ENCODE measurements at regions of chr5 and their contacts with region 1.

Region 1: GRCh38 chr5:168291464-168291961 is at the start of gene WWC1:
- DNase-seq: peak in 1 of 2 experiments; percentile 92
- H3K4me3 ChIP-seq: peak within 1 kb of the TSS; percentile 58 to 75 (median 68)
- H3K27ac ChIP-seq: no peak within 1 kb of the TSS
- H3K4me1 ChIP-seq: peaks cover 12 to 32% (median 20%) of the 10 kb centered on the region in 4 experiments
- H3K27me3 ChIP-seq: no peaks in the 10 kb centered on the region; a peak in 1 of 7 replicates
- CTCF ChIP-seq: peak in 2 of 3 experiments; percentile 25 to 52; a peak in 3 of 4 replicates
- EP300 ChIP-seq: no peak
- POLR2A ChIP-seq: peak in 1 of 2 experiments; percentile 61; a peak in 2 of 3 replicates
- RAD21 ChIP-seq: peak; percentile 45 to 53
- total RNA-seq, gene WWC1: 41.1 and 42.7 TPM in 2 replicates

Region 2: GRCh38 chr5:168244838-168245559 is 46.5 kb before region 1 on chr5:
- CTCF ChIA-PET with region 1: no interaction called
- POLR2A ChIA-PET with region 1: no interaction called
- DNase-seq: no peak
- H3K4me3 ChIP-seq: no peak overlapping the region
- H3K27ac ChIP-seq: no peak overlapping the region
- H3K4me1 ChIP-seq: peaks cover 0 to 3% (median 0%) of the 10 kb centered on the region in 4 experiments; a peak in 1 of 7 replicates
- H3K27me3 ChIP-seq: peaks cover 0 to 10% (median 7%) of the 10 kb centered on the region in 4 experiments; a peak in 6 of 7 replicates
- CTCF ChIP-seq: no peak
- EP300 ChIP-seq: no peak
- POLR2A ChIP-seq: no peak
- RAD21 ChIP-seq: no peak

Region 3: GRCh38 chr5:168268949-168269943 is 22.3 kb before region 1 on chr5:
- CTCF ChIA-PET with region 1: interaction called, 16 read pairs
- POLR2A ChIA-PET with region 1: no interaction called
- DNase-seq: peak; percentile 86 to 98
- H3K4me3 ChIP-seq: peak overlapping the region; percentile 17 to 57 (median 31); a peak in 5 of 8 replicates
- H3K27ac ChIP-seq: no peak overlapping the region
- H3K4me1 ChIP-seq: peaks cover 0 to 9% (median under 1%) of the 10 kb centered on the region in 4 experiments; a peak in 3 of 7 replicates
- H3K27me3 ChIP-seq: no peaks in the 10 kb centered on the region; a peak in 1 of 7 replicates
- CTCF ChIP-seq: peak; percentile 94 to 97 (median 94)
- EP300 ChIP-seq: 0 out of 3 replicates have a peak, but pooled peaks of 1 of the 2 experiments have one; percentile 45
- POLR2A ChIP-seq: peak in 1 of 2 experiments; percentile 50; a peak in 2 of 3 replicates
- RAD21 ChIP-seq: peak; percentile 99 to 100

Region 4: GRCh38 chr5:168317521-168318147 is 26.1 kb after region 1 on chr5:
- CTCF ChIA-PET with region 1: interaction called, 56 read pairs
- POLR2A ChIA-PET with region 1: interaction called, 4 read pairs
- DNase-seq: no peak
- H3K4me3 ChIP-seq: no peak overlapping the region
- H3K27ac ChIP-seq: no peak overlapping the region
- H3K4me1 ChIP-seq: peaks cover 2 to 19% (median 4%) of the 10 kb centered on the region in 4 experiments; a peak in 5 of 7 replicates
- H3K27me3 ChIP-seq: no peaks in the 10 kb centered on the region
- CTCF ChIP-seq: no peak
- EP300 ChIP-seq: no peak
- POLR2A ChIP-seq: no peak
- RAD21 ChIP-seq: no peak

Region 5: DNA sequence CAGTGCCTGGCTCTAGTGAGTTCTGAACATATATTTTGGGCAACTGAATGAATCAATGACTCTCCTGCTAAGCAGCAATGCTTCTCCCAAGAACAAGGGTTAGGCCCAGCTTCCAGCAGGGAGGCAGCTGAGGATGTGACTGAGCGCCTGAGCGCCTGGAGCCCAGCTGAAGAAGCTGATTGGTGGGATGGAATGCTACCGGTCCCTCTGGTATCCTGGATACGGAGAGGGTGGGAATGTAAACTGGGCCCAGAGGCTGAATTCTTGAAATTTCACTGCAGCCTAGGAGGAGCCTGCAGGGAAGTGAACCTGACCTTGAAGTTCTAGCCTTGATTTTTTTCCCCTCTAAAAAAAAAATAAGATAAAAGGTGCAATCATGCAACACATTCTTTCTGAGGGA is 43.2 kb after region 1 on chr5:
- CTCF ChIA-PET with region 1: interaction called, 40 read pairs
- POLR2A ChIA-PET with region 1: interaction called, 7 read pairs
- DNase-seq: peak; percentile 64 to 81
- H3K4me3 ChIP-seq: peak overlapping the region in 1 of 4 experiments; percentile 31; a peak in 1 of 8 replicates
- H3K27ac ChIP-seq: peak overlapping the region; percentile 34; the same call in 1 of the 2 replicates
- H3K4me1 ChIP-seq: peaks cover 20 to 36% (median 29%) of the 10 kb centered on the region in 4 experiments
- H3K27me3 ChIP-seq: no peaks in the 10 kb centered on the region
- CTCF ChIP-seq: no peak
- EP300 ChIP-seq: peak in 1 of 2 experiments; percentile 52; a peak in 1 of 3 replicates
- POLR2A ChIP-seq: peak in 1 of 2 experiments; percentile 39; a peak in 1 of 3 replicates
- RAD21 ChIP-seq: no peak

Region 6: GRCh38 chr5:168365581-168366081 is 74.1 kb after region 1 on chr5:
- CTCF ChIA-PET with region 1: interaction called, 15 read pairs
- POLR2A ChIA-PET with region 1: interaction called, 3 read pairs
- DNase-seq: peak in 1 of 2 experiments; percentile 67
- H3K4me3 ChIP-seq: no peak overlapping the region
- H3K27ac ChIP-seq: no peak overlapping the region
- H3K4me1 ChIP-seq: peaks cover 7 to 19% (median 13%) of the 10 kb centered on the region in 4 experiments
- H3K27me3 ChIP-seq: no peaks in the 10 kb centered on the region
- CTCF ChIP-seq: peak; percentile 37 to 54 (median 52); a peak in 3 of 4 replicates
- EP300 ChIP-seq: no peak
- POLR2A ChIP-seq: no peak
- RAD21 ChIP-seq: peak; percentile 42 to 47

Measured in H1 (cell line).